ENCODE measurements at regions of chr15 and their contacts with region 1.

Region 1: GRCh38 chr15:84588053-84588874 is 12.5 kb upstream of the ZSCAN2 start:
- DNase-seq: peak; percentile 93
- ATAC-seq: peak; percentile 100
- H3K4me3 Mint-ChIP-seq: peak overlapping the region; percentile 35
- H3K27ac Mint-ChIP-seq: no peak overlapping the region
- H3K4me1 Mint-ChIP-seq: peaks cover 2% of the 10 kb centered on the region
- H3K27me3 Mint-ChIP-seq: no peaks in the 10 kb centered on the region

Region 2: GRCh38 chr15:84633311-84634227 is 45.3 kb after region 1 on chr15:
- CTCF ChIA-PET with region 1: interaction called, 4 read pairs
- POLR2A ChIA-PET with region 1: no interaction called
- intact Hi-C with region 1: loop called (anchors 1 to 5 kb)
- DNase-seq: peak; percentile 87
- ATAC-seq: peak; percentile 57
- H3K4me3 Mint-ChIP-seq: peak overlapping the region; percentile 93
- H3K27ac Mint-ChIP-seq: peak overlapping the region; percentile 99
- H3K4me1 Mint-ChIP-seq: peaks cover 45% of the 10 kb centered on the region
- H3K27me3 Mint-ChIP-seq: no peaks in the 10 kb centered on the region

Region 3: GRCh38 chr15:84818261-84819131 is 230.2 kb after region 1 on chr15:
- CTCF ChIA-PET with region 1: interaction called, 3 read pairs
- POLR2A ChIA-PET with region 1: no interaction called
- intact Hi-C with region 1: loop called in 1 of 2 experiments (anchors 10 kb)
- DNase-seq: peak; percentile 31
- ATAC-seq: peak; percentile 37
- H3K4me3 Mint-ChIP-seq: no peak overlapping the region
- H3K27ac Mint-ChIP-seq: no peak overlapping the region
- H3K4me1 Mint-ChIP-seq: peaks cover 10% of the 10 kb centered on the region
- H3K27me3 Mint-ChIP-seq: peaks cover 10% of the 10 kb centered on the region

Region 4: GRCh38 chr15:84929744-84930371 is 341.6 kb after region 1 on chr15:
- CTCF ChIA-PET with region 1: interaction called, 18 read pairs
- POLR2A ChIA-PET with region 1: no interaction called
- intact Hi-C with region 1: loop called (anchors 1 kb)
- DNase-seq: peak; percentile 44
- ATAC-seq: peak; percentile 40
- H3K4me3 Mint-ChIP-seq: no peak overlapping the region
- H3K27ac Mint-ChIP-seq: no peak overlapping the region
- H3K4me1 Mint-ChIP-seq: peaks cover 5% of the 10 kb centered on the region
- H3K27me3 Mint-ChIP-seq: no peaks in the 10 kb centered on the region

Region 5: DNA sequence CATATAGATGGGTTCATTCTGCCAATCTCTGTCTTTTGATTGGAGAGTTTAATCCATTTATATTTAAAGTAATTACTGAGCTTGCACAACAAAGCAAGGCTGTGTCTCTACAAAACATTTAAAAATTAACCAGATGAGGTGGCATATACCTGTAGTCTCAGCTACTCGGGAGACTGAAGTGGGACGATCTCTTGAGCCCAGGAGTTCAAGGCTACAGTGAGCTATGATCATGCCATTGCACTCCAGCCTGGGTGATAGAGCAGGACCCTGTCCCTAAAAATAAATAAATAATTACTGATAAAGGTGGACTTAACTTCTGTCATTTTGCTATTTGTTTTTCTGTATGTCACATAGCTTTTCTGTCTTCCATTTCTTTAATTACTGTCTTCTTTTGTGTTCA is 471.5 kb after region 1 on chr15:
- CTCF ChIA-PET with region 1: no interaction called
- POLR2A ChIA-PET with region 1: no interaction called
- intact Hi-C with region 1: no loop called
- DNase-seq: no peak
- ATAC-seq: no peak
- H3K4me3 Mint-ChIP-seq: no peak overlapping the region
- H3K27ac Mint-ChIP-seq: no peak overlapping the region
- H3K4me1 Mint-ChIP-seq: peaks cover 30% of the 10 kb centered on the region
- H3K27me3 Mint-ChIP-seq: no peaks in the 10 kb centered on the region